CD8-positive, alpha-beta T cell (primary cell): ENCODE measurements at regions of chr4 and their contacts with region 1.

Region 1: DNA sequence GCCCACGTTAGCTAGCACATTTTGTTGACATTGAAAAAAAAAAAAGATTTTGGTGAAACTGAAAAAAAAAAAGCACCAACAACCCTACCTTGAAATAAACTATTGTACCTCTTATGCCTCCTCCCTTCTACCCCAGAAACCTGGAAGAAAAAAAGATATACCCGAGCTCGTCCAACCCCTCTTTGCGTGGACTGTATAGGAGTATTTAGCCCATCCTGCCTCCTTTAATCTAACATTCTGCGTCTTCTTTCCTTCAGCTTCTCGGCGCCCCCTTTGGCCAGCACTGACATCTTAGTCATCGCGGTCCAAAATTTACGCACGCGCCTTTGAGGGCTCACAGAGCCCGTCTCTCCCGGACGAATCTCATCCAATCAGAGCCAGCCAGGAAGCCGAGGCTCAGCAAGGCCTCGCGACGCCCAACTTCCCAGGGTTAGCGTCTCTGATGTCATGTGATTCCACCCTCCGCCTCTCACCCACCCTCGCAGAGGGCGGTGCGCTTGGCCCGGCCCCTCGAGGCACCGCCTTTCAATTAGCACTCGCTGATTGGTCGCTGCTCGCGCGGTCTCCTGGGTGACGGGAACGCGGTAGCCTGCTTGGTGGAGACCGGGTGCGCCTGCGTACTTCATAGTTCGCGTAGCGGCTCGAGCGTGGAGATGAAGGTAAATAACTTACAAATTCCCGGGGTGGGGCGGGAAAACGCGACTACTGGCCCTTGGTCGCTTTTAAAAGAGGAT is at the start of gene WDR19:
- DNase-seq: peak; percentile 97 to 100 (median 98)
- ATAC-seq: peak; percentile 93
- H3K4me3 ChIP-seq: peak within 1 kb of the TSS; percentile 82 to 92
- H3K4me3 Mint-ChIP-seq: peak within 1 kb of the TSS; percentile 43
- H3K27ac ChIP-seq: peak within 1 kb of the TSS; percentile 56 to 63
- H3K27ac Mint-ChIP-seq: no peak within 1 kb of the TSS
- H3K4me1 ChIP-seq: peaks cover 10% of the 10 kb centered on the region
- H3K4me1 Mint-ChIP-seq: peaks cover 6% of the 10 kb centered on the region
- H3K27me3 ChIP-seq: peaks cover 0 to 2% of the 10 kb centered on the region in 2 experiments
- H3K27me3 Mint-ChIP-seq: peaks cover 4% of the 10 kb centered on the region
- CTCF ChIP-seq: peak; percentile 64
- total RNA-seq, gene WDR19: 10.8 to 11.9 TPM

Region 2: GRCh38 chr4:38319456-38320342 is 862.4 kb before region 1 on chr4:
- CTCF ChIA-PET with region 1: no interaction called
- POLR2A ChIA-PET with region 1: no interaction called
- intact Hi-C with region 1: loop called in 1 of 2 experiments (anchors 10 kb)
- DNase-seq: peak; percentile 83 to 98 (median 90)
- ATAC-seq: peak; percentile 88
- H3K4me3 ChIP-seq: peak overlapping the region; percentile 43 to 51
- H3K4me3 Mint-ChIP-seq: peak overlapping the region; percentile 82
- H3K27ac ChIP-seq: peak overlapping the region; percentile 33 to 78
- H3K27ac Mint-ChIP-seq: peak overlapping the region; percentile 90
- H3K4me1 ChIP-seq: peaks cover 39% of the 10 kb centered on the region
- H3K4me1 Mint-ChIP-seq: peaks cover 62% of the 10 kb centered on the region
- H3K27me3 ChIP-seq: no peaks in the 10 kb centered on the region
- H3K27me3 Mint-ChIP-seq: no peaks in the 10 kb centered on the region
- CTCF ChIP-seq: peak; percentile 96

Region 3: GRCh38 chr4:39032218-39033085 is 149.6 kb before region 1 on chr4 and contains the start of gene TMEM156:
- CTCF ChIA-PET with region 1: no interaction called
- POLR2A ChIA-PET with region 1: no interaction called
- intact Hi-C with region 1: loop called in 1 of 2 experiments (anchors 5 kb)
- DNase-seq: peak in 2 of 9 experiments; percentile 67 to 86
- ATAC-seq: peak; percentile 88
- H3K4me3 ChIP-seq: peak within 1 kb of the TSS; percentile 43 to 49
- H3K4me3 Mint-ChIP-seq: peak within 1 kb of the TSS; percentile 83
- H3K27ac ChIP-seq: peak within 1 kb of the TSS; percentile 30 to 69
- H3K27ac Mint-ChIP-seq: peak within 1 kb of the TSS; percentile 90
- H3K4me1 ChIP-seq: peaks cover 49% of the 10 kb centered on the region
- H3K4me1 Mint-ChIP-seq: peaks cover 39% of the 10 kb centered on the region
- H3K27me3 ChIP-seq: no peaks in the 10 kb centered on the region
- H3K27me3 Mint-ChIP-seq: no peaks in the 10 kb centered on the region
- CTCF ChIP-seq: no peak
- total RNA-seq, gene TMEM156: 8.4 to 9.4 TPM

Region 4: GRCh38 chr4:39365830-39366771 is 184.0 kb after region 1 on chr4 and contains the start of gene RFC1:
- CTCF ChIA-PET with region 1: no interaction called
- POLR2A ChIA-PET with region 1: interaction called, 4 read pairs
- intact Hi-C with region 1: loop called (anchors 2 to 5 kb)
- DNase-seq: peak; percentile 86 to 96 (median 95)
- ATAC-seq: peak; percentile 97
- H3K4me3 ChIP-seq: peak within 1 kb of the TSS; percentile 92 to 99
- H3K4me3 Mint-ChIP-seq: peak within 1 kb of the TSS; percentile 93
- H3K27ac ChIP-seq: peak within 1 kb of the TSS; percentile 81
- H3K27ac Mint-ChIP-seq: peak within 1 kb of the TSS; percentile 94
- H3K4me1 ChIP-seq: peaks cover 18% of the 10 kb centered on the region
- H3K4me1 Mint-ChIP-seq: peaks cover 35% of the 10 kb centered on the region
- H3K27me3 ChIP-seq: no peaks in the 10 kb centered on the region
- H3K27me3 Mint-ChIP-seq: no peaks in the 10 kb centered on the region
- CTCF ChIP-seq: no peak
- total RNA-seq, gene RFC1: 82.2 to 89.8 TPM

Region 5: GRCh38 chr4:39638354-39639240 is 456.5 kb after region 1 on chr4 and contains the start of gene SMIM14:
- CTCF ChIA-PET with region 1: no interaction called
- POLR2A ChIA-PET with region 1: no interaction called
- intact Hi-C with region 1: loop called in 1 of 2 experiments (anchors 5 kb)
- DNase-seq: peak; percentile 72 to 95 (median 90)
- ATAC-seq: peak; percentile 83
- H3K4me3 ChIP-seq: peak within 1 kb of the TSS; percentile 62 to 97
- H3K4me3 Mint-ChIP-seq: peak within 1 kb of the TSS; percentile 90
- H3K27ac ChIP-seq: peak within 1 kb of the TSS; percentile 63 to 91
- H3K27ac Mint-ChIP-seq: peak within 1 kb of the TSS; percentile 96
- H3K4me1 ChIP-seq: peaks cover 18% of the 10 kb centered on the region
- H3K4me1 Mint-ChIP-seq: peaks cover 44% of the 10 kb centered on the region
- H3K27me3 ChIP-seq: no peaks in the 10 kb centered on the region
- H3K27me3 Mint-ChIP-seq: no peaks in the 10 kb centered on the region
- CTCF ChIP-seq: no peak
- total RNA-seq, gene SMIM14: 1.4 TPM